Lower leg skin (tissue), 4 donors: ENCODE measurements at regions of chr1 and their contacts with region 1.

Region 1: DNA sequence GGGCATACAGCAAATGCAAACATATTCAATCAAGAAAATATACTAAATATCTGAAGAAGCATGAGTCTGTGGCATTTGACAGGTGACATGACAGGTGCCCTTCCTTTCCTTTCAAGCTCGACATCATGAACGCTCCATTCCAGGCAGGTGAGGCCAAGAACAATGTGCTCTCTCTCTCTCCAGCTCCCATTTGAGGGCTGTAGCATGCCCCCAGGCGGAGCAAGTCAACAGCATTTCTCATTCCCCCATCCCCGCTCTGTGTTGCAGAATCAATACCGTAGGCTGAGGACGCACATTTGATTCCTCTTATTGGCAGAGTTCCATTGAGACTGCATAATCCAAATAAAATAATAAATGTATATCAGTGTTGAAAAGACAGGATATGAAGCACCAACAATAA is 24.6 kb upstream of the PLPPR4 start:
- DNase-seq: no peak
- H3K4me3 ChIP-seq: no peak overlapping the region
- CTCF ChIP-seq: no peak
- POLR2A ChIP-seq: no peak

Region 2: GRCh38 chr1:99384021-99384420 is 144.3 kb after region 1 on chr1:
- intact Hi-C with region 1: loop called (anchors 10 kb)
- DNase-seq: no peak
- H3K4me3 ChIP-seq: no peak overlapping the region
- CTCF ChIP-seq: no peak
- POLR2A ChIP-seq: no peak